CD4-positive, alpha-beta T cell (primary cell): ENCODE measurements at regions of chr2 and their contacts with region 1.

Region 1: DNA sequence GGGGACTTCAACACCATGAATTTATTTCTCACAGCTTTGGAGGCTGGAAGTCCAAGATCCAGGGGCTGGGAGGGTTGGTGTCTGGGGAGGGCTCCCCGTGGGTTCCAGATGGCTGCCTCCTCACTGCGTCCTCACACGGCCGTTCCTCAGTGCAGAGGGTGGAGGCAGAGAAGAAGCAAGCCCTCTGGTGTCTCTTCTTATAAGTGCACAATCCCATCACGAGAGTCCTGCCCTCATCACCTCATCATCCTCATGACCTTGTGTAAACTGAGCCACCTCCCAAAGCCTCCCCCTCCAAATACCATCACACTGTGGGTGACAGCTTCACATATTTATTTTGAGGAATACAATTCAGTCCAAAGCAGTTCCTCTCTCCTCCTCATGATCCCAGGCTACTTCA is 26.3 kb downstream of the TMEM163 start:
- DNase-seq: peak in 3 of 14 experiments; percentile 47 to 60 (median 57)
- ATAC-seq: peak; percentile 69
- H3K4me3 ChIP-seq: no peak overlapping the region
- H3K4me3 Mint-ChIP-seq: no peak overlapping the region
- H3K27ac ChIP-seq: no peak overlapping the region
- H3K27ac Mint-ChIP-seq: no peak overlapping the region
- H3K4me1 ChIP-seq: peaks cover 3% of the 10 kb centered on the region
- H3K4me1 Mint-ChIP-seq: no peaks in the 10 kb centered on the region
- H3K27me3 ChIP-seq: peaks cover 0 to 3% of the 10 kb centered on the region in 2 experiments
- H3K27me3 Mint-ChIP-seq: peaks cover 13% of the 10 kb centered on the region
- CTCF ChIP-seq: peak; percentile 29

Region 2: DNA sequence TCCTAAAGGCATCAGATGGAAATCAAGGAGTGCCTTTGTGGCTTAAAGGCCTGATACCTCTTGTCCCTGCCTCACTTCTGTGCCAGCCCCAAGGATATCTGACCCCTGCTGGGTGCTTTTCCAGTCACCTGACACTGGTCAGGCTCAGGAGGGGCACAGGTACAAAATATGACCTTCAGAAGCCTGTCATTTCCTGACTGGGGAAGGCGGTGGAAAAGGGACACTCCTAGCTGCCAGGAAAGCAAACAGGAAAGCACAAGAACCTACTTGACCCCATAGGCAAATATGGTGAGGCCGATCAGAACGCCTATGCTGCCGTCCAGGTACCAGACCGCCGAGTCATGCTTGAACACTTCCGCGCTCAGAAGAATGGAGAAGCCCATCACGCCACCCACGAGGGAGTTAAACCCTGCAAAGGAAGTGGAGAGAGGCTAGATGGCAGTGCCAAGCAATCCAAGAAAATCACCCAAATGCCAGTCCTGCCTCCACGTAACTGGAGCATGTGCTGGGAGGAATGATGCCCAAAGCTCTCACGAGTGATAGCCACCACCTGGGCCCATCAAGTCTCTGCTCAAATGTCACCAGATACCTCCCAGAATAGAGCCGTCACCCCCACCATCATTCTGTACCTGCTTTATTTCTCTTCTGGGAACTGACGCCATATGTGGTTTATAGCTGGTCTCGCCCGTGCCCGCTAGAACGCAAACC is 234.6 kb before region 1 on chr2:
- CTCF ChIA-PET with region 1: no interaction called
- POLR2A ChIA-PET with region 1: no interaction called
- intact Hi-C with region 1: loop called in 1 of 2 experiments (anchors 10 kb)
- DNase-seq: no peak
- ATAC-seq: no peak
- H3K4me3 ChIP-seq: no peak overlapping the region
- H3K4me3 Mint-ChIP-seq: no peak overlapping the region
- H3K27ac ChIP-seq: no peak overlapping the region
- H3K27ac Mint-ChIP-seq: no peak overlapping the region
- H3K4me1 ChIP-seq: no peaks in the 10 kb centered on the region
- H3K4me1 Mint-ChIP-seq: no peaks in the 10 kb centered on the region
- H3K27me3 ChIP-seq: no peaks in the 10 kb centered on the region
- H3K27me3 Mint-ChIP-seq: no peaks in the 10 kb centered on the region
- CTCF ChIP-seq: no peak

Region 3: DNA sequence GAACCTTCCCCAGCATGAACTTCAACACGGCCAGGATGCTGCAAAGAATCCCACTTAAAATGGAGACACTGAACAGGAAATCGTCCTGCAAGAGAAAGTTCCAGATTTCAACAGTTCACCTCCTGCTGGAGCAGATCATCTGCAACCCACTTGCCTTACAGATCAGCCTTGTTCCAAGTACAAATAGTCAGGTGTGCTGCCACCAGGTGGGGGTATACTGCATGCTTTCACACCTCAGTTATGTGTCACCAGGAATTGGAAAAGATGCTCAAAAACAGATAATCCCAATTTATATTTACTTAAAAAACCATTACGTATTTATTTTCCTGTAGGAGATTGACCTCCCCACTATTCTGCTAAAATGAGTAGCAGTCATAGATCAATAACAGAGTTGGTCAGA is 226.4 kb before region 1 on chr2:
- CTCF ChIA-PET with region 1: no interaction called
- POLR2A ChIA-PET with region 1: no interaction called
- intact Hi-C with region 1: loop called in 1 of 2 experiments (anchors 5 kb)
- DNase-seq: peak in 8 of 14 experiments; percentile 8 to 61 (median 40)
- ATAC-seq: no peak
- H3K4me3 ChIP-seq: no peak overlapping the region
- H3K4me3 Mint-ChIP-seq: no peak overlapping the region
- H3K27ac ChIP-seq: no peak overlapping the region
- H3K27ac Mint-ChIP-seq: no peak overlapping the region
- H3K4me1 ChIP-seq: no peaks in the 10 kb centered on the region
- H3K4me1 Mint-ChIP-seq: no peaks in the 10 kb centered on the region
- H3K27me3 ChIP-seq: no peaks in the 10 kb centered on the region
- H3K27me3 Mint-ChIP-seq: no peaks in the 10 kb centered on the region
- CTCF ChIP-seq: peak; percentile 23

Region 4: GRCh38 chr2:134576478-134576877 is 116.0 kb before region 1 on chr2:
- CTCF ChIA-PET with region 1: no interaction called
- POLR2A ChIA-PET with region 1: no interaction called
- intact Hi-C with region 1: loop called (anchors 2 kb)
- DNase-seq: peak in 5 of 14 experiments; percentile 12 to 54 (median 30)
- ATAC-seq: peak; percentile 26
- H3K4me3 ChIP-seq: no peak overlapping the region
- H3K4me3 Mint-ChIP-seq: no peak overlapping the region
- H3K27ac ChIP-seq: no peak overlapping the region
- H3K27ac Mint-ChIP-seq: no peak overlapping the region
- H3K4me1 ChIP-seq: no peaks in the 10 kb centered on the region
- H3K4me1 Mint-ChIP-seq: no peaks in the 10 kb centered on the region
- H3K27me3 ChIP-seq: no peaks in the 10 kb centered on the region
- H3K27me3 Mint-ChIP-seq: no peaks in the 10 kb centered on the region
- CTCF ChIP-seq: peak; percentile 34

Region 5: GRCh38 chr2:134657637-134658250 is 34.8 kb before region 1 on chr2:
- CTCF ChIA-PET with region 1: no interaction called
- POLR2A ChIA-PET with region 1: no interaction called
- intact Hi-C with region 1: loop called in 1 of 2 experiments (anchors 5 kb)
- DNase-seq: peak in 4 of 14 experiments; percentile 36 to 60 (median 53)
- ATAC-seq: no peak
- H3K4me3 ChIP-seq: no peak overlapping the region
- H3K4me3 Mint-ChIP-seq: no peak overlapping the region
- H3K27ac ChIP-seq: no peak overlapping the region
- H3K27ac Mint-ChIP-seq: no peak overlapping the region
- H3K4me1 ChIP-seq: peaks cover 3% of the 10 kb centered on the region
- H3K4me1 Mint-ChIP-seq: peaks cover 38% of the 10 kb centered on the region
- H3K27me3 ChIP-seq: no peaks in the 10 kb centered on the region
- H3K27me3 Mint-ChIP-seq: no peaks in the 10 kb centered on the region
- CTCF ChIP-seq: peak; percentile 49

Region 6: DNA sequence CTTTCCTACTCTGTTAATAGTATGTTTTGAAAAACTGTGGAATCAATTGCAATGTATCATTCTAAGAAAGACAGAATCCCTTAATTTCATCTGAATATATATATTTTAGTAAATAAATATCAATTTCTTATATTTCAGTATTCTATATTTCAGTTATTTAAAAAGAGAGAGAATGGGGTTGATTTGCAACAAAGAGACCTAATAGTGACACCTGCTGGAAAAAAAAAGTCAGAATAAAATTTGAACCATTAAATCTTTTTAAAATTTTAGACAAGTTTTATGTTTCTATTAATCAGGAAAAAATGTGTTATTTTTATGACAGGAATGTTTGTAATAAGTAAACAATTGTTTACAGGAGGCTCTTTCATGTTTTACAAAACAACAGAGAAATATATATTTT is 205.4 kb after region 1 on chr2:
- CTCF ChIA-PET with region 1: no interaction called
- POLR2A ChIA-PET with region 1: no interaction called
- intact Hi-C with region 1: no loop called
- DNase-seq: peak in 3 of 14 experiments; percentile 11 to 23 (median 18)
- ATAC-seq: no peak
- H3K4me3 ChIP-seq: no peak overlapping the region
- H3K4me3 Mint-ChIP-seq: no peak overlapping the region
- H3K27ac ChIP-seq: no peak overlapping the region
- H3K27ac Mint-ChIP-seq: no peak overlapping the region
- H3K4me1 ChIP-seq: no peaks in the 10 kb centered on the region
- H3K4me1 Mint-ChIP-seq: no peaks in the 10 kb centered on the region
- H3K27me3 ChIP-seq: no peaks in the 10 kb centered on the region
- H3K27me3 Mint-ChIP-seq: no peaks in the 10 kb centered on the region
- CTCF ChIP-seq: peak; percentile 64